ENCODE measurements at regions of chr17 and their contacts with region 1.

Region 1: DNA sequence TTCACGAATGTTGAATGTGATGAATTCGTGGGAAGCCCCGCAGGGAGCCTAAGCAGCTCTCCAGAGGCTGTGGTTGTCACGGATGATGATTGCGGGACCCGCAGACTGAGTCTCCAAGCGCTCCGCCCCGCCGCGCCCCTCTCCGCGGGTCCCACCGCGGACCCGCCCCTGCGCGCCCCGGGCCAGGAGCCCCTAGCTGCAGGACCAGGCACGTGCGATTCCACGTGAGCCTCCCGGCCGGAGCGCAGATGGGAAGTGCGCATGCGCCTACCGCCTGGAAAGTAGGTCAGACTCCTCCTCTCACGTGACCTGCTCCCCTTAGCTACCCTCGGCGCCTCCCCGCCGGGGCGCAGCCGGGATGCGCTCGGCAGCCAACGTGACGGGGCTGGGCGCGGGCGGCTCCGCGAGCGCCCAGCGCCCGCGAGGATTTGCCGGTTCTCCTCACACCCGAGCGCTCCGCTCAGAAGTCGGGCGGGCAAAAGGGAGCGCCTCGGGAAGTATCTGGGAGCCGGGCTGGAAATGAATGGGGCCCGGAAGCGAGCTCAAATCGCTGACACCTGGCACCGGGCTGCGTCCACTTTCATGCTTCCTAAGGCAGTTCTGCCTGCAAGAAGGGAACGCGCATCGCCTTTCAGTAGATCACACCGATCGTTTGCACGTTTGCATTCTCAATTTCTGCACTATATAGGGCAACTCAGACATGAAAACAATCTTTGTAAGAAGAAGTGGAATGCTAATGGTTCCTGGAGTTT is 26.4 kb upstream of the HLF start:
- DNase-seq: peak; percentile 62
- ATAC-seq: peak; percentile 84
- H3K4me3 Mint-ChIP-seq: peak overlapping the region; percentile 79
- H3K27ac Mint-ChIP-seq: no peak overlapping the region
- H3K4me1 Mint-ChIP-seq: peaks cover 35% of the 10 kb centered on the region
- H3K27me3 Mint-ChIP-seq: peaks cover 24% of the 10 kb centered on the region
- CTCF ChIP-seq: no peak

Region 2: GRCh38 chr17:54864636-54865356 is 373.6 kb before region 1 on chr17:
- CTCF ChIA-PET with region 1: no interaction called
- POLR2A ChIA-PET with region 1: no interaction called
- intact Hi-C with region 1: no loop called
- DNase-seq: no peak
- ATAC-seq: no peak
- H3K4me3 Mint-ChIP-seq: no peak overlapping the region
- H3K27ac Mint-ChIP-seq: no peak overlapping the region
- H3K4me1 Mint-ChIP-seq: no peaks in the 10 kb centered on the region
- H3K27me3 Mint-ChIP-seq: no peaks in the 10 kb centered on the region
- CTCF ChIP-seq: no peak

Region 3: DNA sequence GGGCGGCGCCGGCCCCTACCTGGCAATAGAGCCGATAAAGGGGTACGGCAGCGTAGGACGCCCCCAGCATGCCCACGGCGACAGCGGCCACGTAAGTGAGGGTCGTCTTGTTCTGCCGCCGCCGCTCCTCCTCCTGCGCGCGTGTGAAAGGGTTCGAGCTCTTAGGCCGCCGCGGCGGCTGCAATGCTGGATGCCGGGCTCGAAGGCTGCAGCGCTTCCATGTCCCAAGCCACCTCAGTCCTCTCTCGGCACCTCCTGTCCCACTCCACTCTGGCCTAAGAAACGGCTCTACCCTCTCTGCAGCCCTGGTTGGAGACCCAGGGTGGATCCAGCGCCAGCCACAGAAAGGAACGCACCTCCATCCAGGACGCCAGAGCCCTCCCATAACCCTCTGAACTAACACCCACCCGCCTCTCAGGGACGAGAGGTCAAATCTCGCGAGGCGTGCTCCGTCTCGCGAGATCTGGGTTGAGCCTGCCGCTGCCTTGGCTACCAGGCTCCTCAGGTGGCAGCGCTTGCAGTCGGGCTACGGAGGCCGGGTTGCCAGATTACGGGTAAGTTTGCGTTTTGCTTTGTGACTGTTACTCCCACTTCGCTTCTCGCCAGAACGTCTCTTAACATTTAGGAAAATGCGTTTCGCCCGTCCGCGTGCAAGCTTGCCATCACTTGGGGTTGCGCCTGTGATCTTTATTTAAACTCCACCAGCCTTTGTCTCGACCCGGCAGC is 269.9 kb before region 1 on chr17 and contains the starts of genes COX11 and STXBP4:
- CTCF ChIA-PET with region 1: no interaction called
- POLR2A ChIA-PET with region 1: no interaction called
- intact Hi-C with region 1: loop called (anchors 10 kb)
- DNase-seq: peak; percentile 90
- ATAC-seq: peak; percentile 97
- H3K4me3 Mint-ChIP-seq: no peak within 1 kb of the TSS
- H3K27ac Mint-ChIP-seq: no peak within 1 kb of the TSS
- H3K4me1 Mint-ChIP-seq: peaks cover 24% of the 10 kb centered on the region
- H3K27me3 Mint-ChIP-seq: no peaks in the 10 kb centered on the region
- CTCF ChIP-seq: no peak
- total RNA-seq, gene COX11: 38.5 and 46.5 TPM in 2 replicates
- total RNA-seq, gene STXBP4: 6.9 and 9.5 TPM in 2 replicates

Region 4: GRCh38 chr17:55168958-55169687 is 69.2 kb before region 1 on chr17:
- CTCF ChIA-PET with region 1: no interaction called
- POLR2A ChIA-PET with region 1: no interaction called
- intact Hi-C with region 1: loop called (anchors 5 kb)
- DNase-seq: no peak
- ATAC-seq: peak; percentile 92
- H3K4me3 Mint-ChIP-seq: no peak overlapping the region
- H3K27ac Mint-ChIP-seq: peak overlapping the region; percentile 51
- H3K4me1 Mint-ChIP-seq: peaks cover 24% of the 10 kb centered on the region
- H3K27me3 Mint-ChIP-seq: no peaks in the 10 kb centered on the region
- CTCF ChIP-seq: no peak